Gastrocnemius medialis (tissue), 4 donors: ENCODE measurements at regions of chr22 and their contacts with region 1.

Region 1: DNA sequence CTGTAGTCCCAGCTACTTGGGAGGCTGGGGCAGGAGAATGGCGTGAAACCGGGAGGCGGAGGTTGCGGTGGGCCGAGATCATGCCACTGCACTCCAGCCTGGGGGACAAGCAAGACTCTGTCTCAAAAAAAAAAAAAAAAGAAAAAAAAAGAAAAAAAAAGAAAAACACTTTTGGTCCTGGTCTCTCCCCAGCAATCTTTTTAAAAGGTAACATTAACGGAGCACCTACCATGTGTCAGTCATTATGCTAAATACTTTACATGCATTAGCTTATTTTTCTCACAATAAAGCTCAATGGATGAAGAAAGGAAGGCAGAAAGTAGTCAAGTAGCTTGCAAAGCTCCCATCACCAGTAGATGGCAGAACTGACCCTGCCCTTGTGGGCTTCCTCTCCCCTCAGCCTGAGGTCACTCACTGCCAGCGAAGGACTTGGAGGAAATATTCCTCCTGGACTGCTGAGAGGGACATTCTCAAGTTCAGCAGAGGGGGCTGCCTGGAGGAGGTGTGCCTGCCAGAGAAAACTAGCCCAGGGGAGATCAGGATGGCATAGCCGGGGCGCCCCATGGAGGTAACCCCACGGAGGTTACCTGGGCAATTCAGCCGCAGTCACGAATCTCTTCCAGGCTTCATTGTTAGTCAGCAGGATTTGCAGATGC is 15.5 kb downstream of the APOL3 start:
- DNase-seq: peak; percentile 22 to 61
- ATAC-seq: peak; percentile 68 to 95
- H3K4me3 ChIP-seq: peak overlapping the region in 1 of 4 donors; percentile 12
- H3K27ac ChIP-seq: peak overlapping the region; percentile 18 to 54 (median 32)
- H3K4me1 ChIP-seq: peaks cover 5 to 22% of the 10 kb centered on the region in 2 donors
- H3K27me3 ChIP-seq: no peaks in the 10 kb centered on the region
- CTCF ChIP-seq: peak; percentile 58 to 76 (median 67)
- POLR2A ChIP-seq: no peak

Region 2: DNA sequence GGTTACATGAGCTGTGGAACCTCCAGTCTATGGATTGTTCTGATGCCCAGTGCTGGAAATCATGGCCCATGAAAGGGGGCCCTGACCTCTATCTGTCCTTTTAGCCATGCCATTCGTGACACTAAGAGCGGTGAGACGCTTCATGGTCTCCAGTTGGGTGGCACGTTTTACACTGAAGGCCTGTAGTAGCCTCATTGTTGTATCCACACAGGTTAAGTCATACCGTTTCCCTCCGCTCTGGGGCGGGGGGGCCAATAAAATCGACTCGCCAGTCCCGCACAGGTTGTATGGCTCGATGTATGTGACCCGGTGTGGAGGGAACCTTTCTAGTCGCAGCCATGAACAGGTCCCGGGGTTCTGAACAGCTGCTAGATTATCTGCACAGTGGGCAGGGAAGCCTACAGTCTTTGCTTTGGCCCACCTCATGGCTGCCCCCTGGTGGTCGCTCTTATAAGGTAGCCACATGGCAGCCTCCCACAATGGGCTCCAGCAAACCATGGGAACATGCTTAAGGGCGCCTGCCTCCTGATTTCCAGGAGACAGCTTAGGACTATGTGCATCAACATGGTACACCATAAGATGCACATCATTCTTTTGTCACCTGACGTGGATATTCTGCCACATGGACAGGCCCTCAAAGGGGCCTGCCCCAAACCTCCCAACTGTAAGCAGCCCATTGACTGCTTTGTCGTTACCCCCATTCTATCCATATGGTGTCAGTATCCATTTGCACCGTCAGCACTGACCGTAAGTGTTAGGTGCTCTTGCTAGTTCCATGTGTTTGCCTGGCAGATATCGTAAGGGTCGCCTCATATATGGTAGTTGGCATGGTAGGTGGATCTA is 35.2 kb after region 1 on chr22:
- in situ Hi-C with region 1: loop called in 1 of 4 experiments (anchors 5 kb)
- intact Hi-C with region 1: loop called (anchors 2 kb)
- DNase-seq: peak; percentile 43 to 66
- ATAC-seq: peak; percentile 52 to 93
- H3K4me3 ChIP-seq: no peak overlapping the region
- H3K27ac ChIP-seq: no peak overlapping the region
- H3K4me1 ChIP-seq: peaks cover 0 to 5% of the 10 kb centered on the region in 2 donors
- H3K27me3 ChIP-seq: no peaks in the 10 kb centered on the region
- CTCF ChIP-seq: peak; percentile 59 to 83 (median 80)
- POLR2A ChIP-seq: no peak

Region 3: GRCh38 chr22:36211237-36211861 is 66.3 kb after region 1 on chr22:
- in situ Hi-C with region 1: no loop called
- intact Hi-C with region 1: no loop called
- DNase-seq: no peak
- ATAC-seq: no peak
- H3K4me3 ChIP-seq: no peak overlapping the region
- H3K27ac ChIP-seq: no peak overlapping the region
- H3K4me1 ChIP-seq: no peaks in the 10 kb centered on the region
- H3K27me3 ChIP-seq: no peaks in the 10 kb centered on the region
- CTCF ChIP-seq: no peak
- POLR2A ChIP-seq: no peak

Region 4: GRCh38 chr22:36221799-36222751 is 77.1 kb after region 1 on chr22:
- in situ Hi-C with region 1: no loop called
- intact Hi-C with region 1: loop called (anchors 5 kb)
- DNase-seq: peak in 1 of 2 donors; percentile 40
- ATAC-seq: no peak
- H3K4me3 ChIP-seq: no peak overlapping the region
- H3K27ac ChIP-seq: no peak overlapping the region
- H3K4me1 ChIP-seq: peaks cover 12 to 15% of the 10 kb centered on the region in 2 donors
- H3K27me3 ChIP-seq: no peaks in the 10 kb centered on the region
- CTCF ChIP-seq: peak; percentile 27 to 69 (median 56)
- POLR2A ChIP-seq: no peak

Region 5: DNA sequence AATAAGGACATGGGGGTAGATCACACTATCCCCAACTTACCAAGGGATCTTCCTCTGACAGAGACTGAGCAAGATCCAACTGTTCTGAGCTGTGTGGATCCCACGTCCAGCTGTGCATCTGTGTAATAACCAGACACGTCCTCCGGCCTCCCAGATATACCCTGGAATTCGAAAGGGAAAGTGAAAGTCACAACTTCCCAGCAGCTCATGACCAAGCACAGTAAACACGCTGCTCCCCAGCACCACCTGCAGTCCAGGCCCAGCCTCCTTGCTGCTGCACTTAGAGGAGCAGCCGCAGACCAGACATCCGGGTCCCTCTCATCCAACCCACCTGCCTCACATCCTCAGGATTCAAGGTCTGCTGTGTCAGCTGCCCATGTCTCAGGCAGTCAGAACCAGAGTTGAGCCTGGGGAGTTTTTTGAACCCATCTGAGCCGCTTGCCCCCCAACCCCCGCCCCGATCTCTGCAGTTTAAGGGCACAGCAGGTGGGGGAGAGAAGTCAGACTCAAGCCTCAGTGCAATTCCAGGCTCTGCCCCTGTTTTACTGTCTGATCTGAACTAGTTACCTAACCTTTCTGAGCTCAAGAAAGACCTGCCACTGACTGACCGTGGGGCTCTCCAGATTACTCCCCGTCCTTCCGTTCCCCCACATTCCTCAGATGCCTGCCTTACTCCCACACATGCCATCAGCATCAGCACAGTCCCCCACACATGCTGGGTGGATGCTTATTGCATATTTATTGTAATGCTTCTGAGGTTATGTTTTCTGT is 94.6 kb after region 1 on chr22 and contains the start of gene APOL2:
- in situ Hi-C with region 1: loop called in 1 of 4 experiments (anchors 10 kb)
- intact Hi-C with region 1: no loop called
- DNase-seq: peak; percentile 87 to 93
- ATAC-seq: peak; percentile 97 to 98
- H3K4me3 ChIP-seq: peak within 1 kb of the TSS; percentile 64 to 87 (median 76)
- H3K27ac ChIP-seq: peak within 1 kb of the TSS; percentile 88 to 97 (median 93)
- H3K4me1 ChIP-seq: peaks cover 36 to 48% of the 10 kb centered on the region in 2 donors
- H3K27me3 ChIP-seq: no peaks in the 10 kb centered on the region
- CTCF ChIP-seq: peak; percentile 49 to 82 (median 71)
- POLR2A ChIP-seq: peak; percentile 74 to 83
- total RNA-seq, gene APOL2: 8.7 to 25.5 (median 20.9) TPM

Region 6: GRCh38 chr22:36277482-36278291 is 132.7 kb after region 1 on chr22:
- in situ Hi-C with region 1: no loop called
- intact Hi-C with region 1: loop called (anchors 5 kb)
- DNase-seq: peak in 1 of 2 donors; percentile 41
- ATAC-seq: peak; percentile 54 to 74
- H3K4me3 ChIP-seq: no peak overlapping the region
- H3K27ac ChIP-seq: no peak overlapping the region
- H3K4me1 ChIP-seq: peaks cover 0 to 6% of the 10 kb centered on the region in 2 donors
- H3K27me3 ChIP-seq: no peaks in the 10 kb centered on the region
- CTCF ChIP-seq: peak; percentile 35 to 85 (median 68)
- POLR2A ChIP-seq: no peak

Region 7: DNA sequence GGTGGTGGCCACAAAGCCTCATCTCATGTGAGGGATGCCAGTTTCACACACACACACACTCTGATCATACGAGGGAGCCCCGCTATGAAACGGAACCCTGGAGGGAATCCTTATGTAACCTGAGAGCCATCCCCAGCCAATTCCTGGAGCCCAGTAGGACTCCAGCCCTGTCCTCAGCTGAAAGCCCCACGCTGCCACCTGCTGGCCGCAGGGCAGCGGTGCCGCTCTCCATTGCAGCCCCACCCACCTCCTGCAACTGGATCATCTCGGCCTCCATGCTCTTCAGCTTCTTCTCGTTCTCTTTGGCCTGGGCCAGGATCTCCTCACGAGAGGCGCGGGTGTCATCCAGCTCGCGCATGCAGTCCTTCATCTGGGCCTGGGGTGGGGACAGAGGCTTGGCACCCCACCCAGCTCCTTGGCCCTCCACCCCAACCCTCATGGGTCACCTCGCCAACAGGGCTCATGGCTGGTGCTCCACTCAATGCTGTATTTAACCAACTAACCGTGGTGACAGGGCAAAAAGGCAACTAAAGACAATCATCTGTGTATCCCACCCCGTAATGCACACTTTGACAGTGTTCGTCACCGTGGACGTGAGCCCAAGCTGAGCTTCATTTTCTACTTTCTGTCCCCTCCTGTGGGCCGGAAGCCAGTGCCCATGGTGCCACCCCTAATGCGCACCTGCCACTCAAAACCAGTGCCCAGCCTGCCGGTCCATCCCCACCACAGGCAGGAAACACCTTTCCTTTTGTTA is 141.6 kb after region 1 on chr22:
- in situ Hi-C with region 1: no loop called
- intact Hi-C with region 1: loop called (anchors 1 kb)
- DNase-seq: peak; percentile 47 to 82
- ATAC-seq: peak; percentile 85 to 95
- H3K4me3 ChIP-seq: no peak overlapping the region
- H3K27ac ChIP-seq: peak overlapping the region; percentile 4 to 61 (median 46)
- H3K4me1 ChIP-seq: peaks cover 10 to 11% of the 10 kb centered on the region in 2 donors
- H3K27me3 ChIP-seq: no peaks in the 10 kb centered on the region
- CTCF ChIP-seq: peak; percentile 88 to 97 (median 92)
- POLR2A ChIP-seq: no peak